Dorsolateral prefrontal cortex (tissue), 120 donors: ENCODE measurements at regions of chr9 and their contacts with region 1.

Region 1: GRCh38 chr9:133417541-133418461 is at the start of gene REXO4:
- DNase-seq: peak; percentile 57 to 87 (median 77)
- H3K4me3 ChIP-seq: peak within 1 kb of the TSS; percentile 73 to 98 (median 91)
- H3K27ac ChIP-seq: peak within 1 kb of the TSS in 58 of 59 donors; percentile 51 to 97 (median 87)
- H3K27me3 ChIP-seq: no peaks in the 10 kb centered on the region
- CTCF ChIP-seq: peak in 18 of 56 donors; percentile 6 to 64 (median 24)
- total RNA-seq, gene REXO4: 13.3 to 35.7 (median 24.4) TPM

Region 2: DNA sequence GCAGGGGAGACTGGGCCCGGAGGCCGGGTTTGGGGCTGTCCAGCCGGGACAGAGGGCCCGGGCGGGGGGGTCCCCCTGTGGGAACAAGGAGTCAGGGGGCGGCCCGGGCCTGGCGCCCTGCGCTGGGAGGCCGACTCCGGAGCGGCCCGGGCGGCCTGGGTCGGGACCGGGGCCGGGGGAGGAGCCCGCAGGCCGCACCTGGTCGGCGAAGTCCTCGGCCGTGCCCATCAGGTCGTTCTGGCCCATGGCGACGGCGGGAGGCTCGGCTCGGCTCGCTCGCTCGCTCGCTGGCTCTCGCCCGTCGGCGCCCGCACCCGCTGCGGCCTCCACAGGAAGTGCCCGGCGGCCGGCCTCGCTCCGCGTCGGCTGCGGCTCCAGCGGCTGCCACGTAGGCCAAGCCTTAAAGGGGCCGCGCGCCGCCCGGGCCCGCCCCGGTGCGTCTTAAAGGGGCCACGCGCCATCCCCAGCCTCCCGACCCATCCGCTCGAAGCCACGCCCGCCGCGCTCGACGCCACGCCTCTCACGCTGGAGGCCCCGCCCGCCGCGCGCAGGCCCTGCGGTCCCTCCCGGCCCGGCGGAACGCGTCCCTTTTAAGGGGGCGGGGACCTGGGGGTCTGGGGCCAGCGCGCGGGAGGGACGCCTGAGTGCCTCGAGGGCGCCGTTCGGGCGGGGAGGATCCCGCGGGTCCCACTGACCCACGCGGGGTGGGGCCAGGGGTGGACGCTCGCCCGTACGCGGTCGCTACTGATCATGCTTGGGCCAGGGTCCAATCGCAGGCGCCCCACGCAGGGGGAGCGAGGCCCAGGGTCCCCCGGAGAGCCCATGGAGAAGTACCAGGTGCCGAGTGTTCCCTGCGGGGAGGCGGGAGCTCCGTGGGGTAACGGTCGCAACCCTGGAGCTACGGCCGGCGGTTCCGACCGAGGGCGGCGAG is 41.8 kb before region 1 on chr9 and contains the starts of genes STKLD1 and SURF4:
- intact Hi-C with region 1: loop called in 1 of 2 experiments (anchors 5 kb)
- DNase-seq: peak; percentile 90 to 98 (median 95)
- H3K4me3 ChIP-seq: peak within 1 kb of the TSS; percentile 69 to 100 (median 96)
- H3K27ac ChIP-seq: peak within 1 kb of the TSS; percentile 42 to 97 (median 90)
- H3K27me3 ChIP-seq: no peaks in the 10 kb centered on the region
- CTCF ChIP-seq: peak in 23 of 56 donors; percentile 1 to 40 (median 24)
- total RNA-seq, gene STKLD1: 1.6 to 9.9 (median 5.2) TPM
- total RNA-seq, gene SURF4: 55.4 to 99.4 (median 69.8) TPM

Region 3: GRCh38 chr9:133459476-133460404 is 41.9 kb after region 1 on chr9 and contains the start of gene CACFD1:
- intact Hi-C with region 1: loop called (anchors 5 kb)
- DNase-seq: peak; percentile 94 to 99 (median 97)
- H3K4me3 ChIP-seq: peak within 1 kb of the TSS; percentile 55 to 96 (median 80)
- H3K27ac ChIP-seq: peak within 1 kb of the TSS; percentile 83 to 99 (median 97)
- H3K27me3 ChIP-seq: no peaks in the 10 kb centered on the region
- CTCF ChIP-seq: peak in 8 of 56 donors; percentile 2 to 20 (median 12)
- total RNA-seq, gene CACFD1: 12.0 to 29.6 (median 18.7) TPM

Region 4: GRCh38 chr9:133589454-133590227 is 171.8 kb after region 1 on chr9:
- intact Hi-C with region 1: no loop called
- DNase-seq: no peak
- H3K4me3 ChIP-seq: no peak overlapping the region
- H3K27ac ChIP-seq: no peak overlapping the region
- H3K27me3 ChIP-seq: peaks cover 0 to 7% (median 0%) of the 10 kb centered on the region in 45 donors
- CTCF ChIP-seq: peak in 43 of 56 donors; percentile 10 to 57 (median 35)